HepG2 (cell line): ENCODE measurements at regions of chr5 and their contacts with region 1.

Region 1: DNA sequence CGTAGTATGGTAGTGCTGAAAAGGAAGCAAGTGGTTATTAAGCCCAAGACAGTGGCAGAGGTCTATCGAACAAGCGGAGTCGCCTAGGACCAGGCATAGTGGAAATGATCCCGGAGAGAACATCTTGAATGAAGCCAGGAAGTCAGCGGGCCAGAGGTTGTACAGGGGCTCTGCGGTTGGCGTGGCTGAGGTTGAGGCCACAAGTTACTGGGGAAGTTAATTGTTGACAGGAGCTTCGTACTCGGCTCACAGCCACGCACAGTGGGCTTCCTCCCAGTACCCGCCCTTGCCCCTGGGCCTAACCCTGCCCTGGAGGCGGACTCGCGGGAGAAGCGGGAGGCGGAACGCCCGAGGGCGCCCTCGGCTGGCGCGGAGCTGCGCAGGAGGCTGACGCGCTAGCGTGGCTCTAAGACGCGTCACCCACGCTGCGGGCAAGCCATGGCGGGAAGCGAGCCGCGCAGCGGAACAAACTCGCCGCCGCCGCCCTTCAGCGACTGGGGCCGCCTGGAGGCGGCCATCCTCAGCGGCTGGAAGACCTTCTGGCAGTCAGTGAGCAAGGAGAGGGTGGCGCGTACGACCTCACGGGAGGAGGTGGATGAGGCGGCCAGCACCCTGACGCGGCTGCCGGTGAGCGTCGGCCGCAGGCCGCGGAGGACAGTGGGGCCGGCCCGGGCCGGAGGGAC is at the start of gene FBXO4:
- DNase-seq: peak; percentile 71
- ATAC-seq: peak; percentile 98
- H3K4me3 ChIP-seq: peak within 1 kb of the TSS; percentile 67 to 91 (median 82)
- H3K27ac ChIP-seq: peak within 1 kb of the TSS; percentile 79
- H3K4me1 ChIP-seq: peaks cover 50% of the 10 kb centered on the region
- H3K27me3 ChIP-seq: no peaks in the 10 kb centered on the region; a peak in 1 of 5 replicates
- CTCF ChIP-seq: peak; percentile 93
- EP300 ChIP-seq: peak; percentile 32 to 49; a peak in 2 of 4 replicates
- POLR2A ChIP-seq: peak; percentile 77 to 82
- RAD21 ChIP-seq: peak; percentile 63
- total RNA-seq, gene FBXO4: 16.4 and 19.1 TPM in 2 replicates

Region 2: GRCh38 chr5:41871852-41872251 is 53.2 kb before region 1 on chr5:
- CTCF ChIA-PET with region 1: no interaction called
- POLR2A ChIA-PET with region 1: no interaction called
- in situ Hi-C with region 1: no loop called
- intact Hi-C with region 1: no loop called
- DNase-seq: no peak
- ATAC-seq: no peak
- H3K4me3 ChIP-seq: no peak overlapping the region
- H3K27ac ChIP-seq: no peak overlapping the region
- H3K4me1 ChIP-seq: peaks cover 11% of the 10 kb centered on the region
- H3K27me3 ChIP-seq: peaks cover 0 to 8% of the 10 kb centered on the region in 2 experiments; a peak in 2 of 5 replicates
- CTCF ChIP-seq: no peak
- EP300 ChIP-seq: no peak
- POLR2A ChIP-seq: no peak
- RAD21 ChIP-seq: no peak

Region 3: DNA sequence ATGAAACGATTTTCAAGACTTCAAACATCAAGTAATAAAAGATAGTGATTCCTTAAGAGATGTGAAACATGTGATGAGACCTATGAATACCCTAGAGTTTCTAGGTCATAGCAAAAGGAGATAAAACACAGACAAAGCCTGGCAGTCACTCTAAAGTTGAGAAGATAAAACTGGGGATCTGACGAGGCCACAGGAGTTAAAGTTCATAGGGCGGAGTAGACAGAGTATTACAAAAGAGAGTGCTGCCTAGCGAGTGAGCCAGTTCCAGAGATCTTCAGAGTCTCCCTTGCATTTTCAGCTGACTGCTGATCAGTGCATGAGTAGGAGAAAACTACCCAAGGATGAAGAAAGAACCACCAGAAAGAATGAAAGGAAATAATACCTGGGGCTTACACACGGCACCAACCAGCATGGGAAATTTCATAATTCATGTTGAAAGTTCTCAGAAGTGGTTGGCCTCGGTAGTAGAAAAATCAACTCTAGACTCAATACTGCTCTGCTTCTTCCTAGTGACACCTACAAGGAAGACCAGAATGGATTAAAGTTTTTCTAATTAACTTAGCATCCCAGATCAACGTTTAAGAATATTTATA is 30.5 kb after region 1 on chr5:
- CTCF ChIA-PET with region 1: no interaction called
- POLR2A ChIA-PET with region 1: no interaction called
- in situ Hi-C with region 1: no loop called
- intact Hi-C with region 1: no loop called
- DNase-seq: peak; percentile 55
- ATAC-seq: peak; percentile 100
- H3K4me3 ChIP-seq: peak overlapping the region; percentile 4 to 33 (median 27); a peak in 1 of 6 replicates
- H3K27ac ChIP-seq: no peak overlapping the region
- H3K4me1 ChIP-seq: peaks cover 22% of the 10 kb centered on the region; the same call in 1 of the 2 replicates
- H3K27me3 ChIP-seq: no peaks in the 10 kb centered on the region
- CTCF ChIP-seq: no peak
- EP300 ChIP-seq: peak in 1 of 2 experiments; percentile 48; a peak in 1 of 4 replicates
- POLR2A ChIP-seq: no peak
- RAD21 ChIP-seq: no peak

Region 4: DNA sequence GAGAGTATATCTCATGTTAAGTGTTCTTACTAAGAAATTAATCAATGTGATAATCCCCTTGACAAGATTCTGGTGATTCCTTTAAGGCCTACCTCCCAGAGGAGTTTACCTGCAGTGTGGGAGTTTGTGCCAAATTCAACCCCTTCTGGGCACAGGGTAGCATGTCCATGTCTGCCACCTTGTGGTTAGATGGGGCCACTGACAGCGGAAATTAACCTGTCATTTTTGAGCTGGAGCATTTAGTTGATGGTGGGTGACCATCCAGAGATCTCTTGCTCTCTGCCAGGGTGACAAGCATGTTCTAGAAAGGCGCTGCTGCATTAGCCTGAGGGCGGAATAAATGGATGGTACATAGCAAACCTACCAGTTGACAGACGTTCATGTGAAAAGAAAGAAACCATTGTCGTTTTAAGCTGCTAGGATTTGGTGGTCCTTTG is 132.3 kb after region 1 on chr5:
- CTCF ChIA-PET with region 1: no interaction called
- POLR2A ChIA-PET with region 1: no interaction called
- in situ Hi-C with region 1: no loop called
- intact Hi-C with region 1: loop called (anchors 2 kb)
- DNase-seq: peak; percentile 28
- ATAC-seq: peak; percentile 93
- H3K4me3 ChIP-seq: no peak overlapping the region
- H3K27ac ChIP-seq: no peak overlapping the region
- H3K4me1 ChIP-seq: no peaks in the 10 kb centered on the region
- H3K27me3 ChIP-seq: no peaks in the 10 kb centered on the region
- CTCF ChIP-seq: peak; percentile 81
- EP300 ChIP-seq: no peak
- POLR2A ChIP-seq: no peak
- RAD21 ChIP-seq: peak; percentile 61; the same call in 1 of the 2 replicates

Region 5: DNA sequence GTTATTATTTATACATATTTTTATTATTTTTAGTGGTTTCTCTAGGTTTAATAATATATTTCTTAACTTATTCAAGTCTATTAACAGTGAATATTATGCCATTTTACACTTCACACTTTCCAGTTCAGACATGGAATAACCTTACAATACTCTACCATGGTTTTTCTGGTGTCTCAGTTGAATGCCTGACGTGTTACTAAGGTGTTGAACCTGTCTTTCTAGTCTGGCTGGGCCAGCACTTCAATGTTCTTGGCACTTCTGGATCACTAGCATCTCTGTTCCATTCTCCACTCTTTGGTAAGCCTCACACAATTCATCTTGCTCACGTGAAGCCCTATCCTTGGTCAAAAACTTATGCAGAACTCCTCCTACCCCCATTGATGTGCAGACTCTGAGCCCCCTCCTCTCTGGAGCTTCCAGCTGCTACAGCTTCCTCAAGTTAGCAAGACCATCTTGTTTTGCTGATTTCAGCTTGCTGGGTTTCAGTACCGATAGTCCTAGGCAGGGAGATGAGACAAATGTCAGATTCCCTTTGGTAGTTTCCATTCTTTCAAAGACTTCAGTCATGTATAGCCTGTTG is 243.2 kb after region 1 on chr5:
- CTCF ChIA-PET with region 1: no interaction called
- POLR2A ChIA-PET with region 1: no interaction called
- in situ Hi-C with region 1: no loop called
- intact Hi-C with region 1: no loop called
- DNase-seq: no peak
- ATAC-seq: no peak
- H3K4me3 ChIP-seq: no peak overlapping the region
- H3K27ac ChIP-seq: no peak overlapping the region
- H3K4me1 ChIP-seq: no peaks in the 10 kb centered on the region
- H3K27me3 ChIP-seq: no peaks in the 10 kb centered on the region
- CTCF ChIP-seq: no peak
- EP300 ChIP-seq: no peak
- POLR2A ChIP-seq: no peak
- RAD21 ChIP-seq: no peak

Region 6: DNA sequence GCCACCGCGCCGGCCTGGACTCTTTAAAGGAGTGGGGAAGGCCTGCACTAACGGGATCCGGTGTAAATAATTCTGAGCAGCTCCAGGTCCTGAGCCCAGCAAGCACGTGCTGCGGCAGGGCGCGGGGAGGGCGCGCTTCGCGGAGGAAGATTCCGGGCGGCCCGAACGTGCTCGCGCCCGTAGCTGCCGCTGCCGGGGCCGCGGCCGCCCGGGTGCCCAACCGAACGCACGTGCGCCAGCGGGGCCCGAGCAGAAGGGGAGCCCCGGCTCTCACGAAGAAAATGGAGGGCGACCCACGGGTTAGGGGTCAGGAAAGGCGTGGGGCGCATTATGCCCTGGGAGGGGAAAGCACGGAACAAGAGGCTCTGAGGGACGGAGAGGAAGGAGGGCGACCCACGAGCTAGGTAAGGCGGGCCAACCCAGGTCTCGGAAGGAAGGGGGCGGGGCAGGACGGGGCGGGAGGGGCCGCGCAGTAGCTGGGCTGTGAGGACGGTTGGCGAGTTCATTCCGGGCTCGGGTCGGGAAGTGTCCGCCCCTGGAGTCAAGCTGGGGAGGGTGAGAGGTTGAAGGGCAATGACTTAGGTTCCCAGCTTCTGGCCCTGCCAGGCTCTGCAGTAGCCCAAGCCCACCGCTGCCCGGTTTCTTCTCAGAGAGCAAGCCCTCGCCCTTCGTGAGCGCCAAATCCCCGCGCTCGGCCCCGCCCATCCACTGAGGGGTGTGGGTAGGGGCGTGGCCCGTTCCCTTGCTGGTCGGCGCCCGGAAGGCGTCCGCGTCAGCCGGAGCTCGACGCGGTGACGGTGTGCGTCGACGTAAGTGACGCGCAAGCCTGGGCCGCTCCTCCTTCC is 1195.9 kb after region 1 on chr5 and contains the start of gene ZNF131:
- CTCF ChIA-PET with region 1: no interaction called
- POLR2A ChIA-PET with region 1: no interaction called
- in situ Hi-C with region 1: no loop called
- intact Hi-C with region 1: no loop called
- DNase-seq: peak; percentile 89
- ATAC-seq: peak; percentile 95
- H3K4me3 ChIP-seq: peak within 1 kb of the TSS; percentile 88 to 97 (median 92)
- H3K27ac ChIP-seq: peak within 1 kb of the TSS; percentile 98
- H3K4me1 ChIP-seq: peaks cover 45% of the 10 kb centered on the region
- H3K27me3 ChIP-seq: no peaks in the 10 kb centered on the region; a peak in 1 of 5 replicates
- CTCF ChIP-seq: no peak
- EP300 ChIP-seq: no peak
- POLR2A ChIP-seq: peak; percentile 76 to 94
- RAD21 ChIP-seq: no peak
- total RNA-seq, gene ZNF131: 30.4 and 33.3 TPM in 2 replicates